Heart right ventricle (tissue), 16 donors: ENCODE measurements at regions of chr3 and their contacts with region 1.

Region 1: DNA sequence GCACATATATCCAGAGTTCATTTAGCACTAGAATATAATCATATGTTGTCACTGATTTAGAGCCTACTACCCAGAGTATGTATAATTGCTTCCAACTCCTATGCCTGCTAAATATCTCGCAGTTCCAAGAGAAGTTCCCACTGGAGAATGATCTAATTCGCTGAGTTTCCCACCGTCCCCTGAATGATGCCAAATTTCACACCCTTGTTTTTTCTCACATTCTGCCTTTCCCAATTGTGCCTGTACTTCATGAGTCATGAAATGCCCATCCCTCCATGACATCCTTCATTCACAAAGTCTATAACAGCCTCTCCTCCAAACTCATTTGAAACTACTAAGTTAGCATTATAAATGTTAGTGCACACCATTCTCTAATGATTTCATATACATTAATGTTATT is 177.2 kb downstream of the CBLB start:
- DNase-seq: no peak
- ATAC-seq: peak in 7 of 8 donors; percentile 31 to 89 (median 49)
- H3K4me3 ChIP-seq: no peak overlapping the region
- H3K27ac ChIP-seq: peak overlapping the region in 2 of 10 donors; percentile 6 to 9
- H3K4me1 ChIP-seq: peaks cover 0 to 37% (median 14%) of the 10 kb centered on the region in 9 donors
- H3K27me3 ChIP-seq: no peaks in the 10 kb centered on the region
- CTCF ChIP-seq: no peak

Region 2: DNA sequence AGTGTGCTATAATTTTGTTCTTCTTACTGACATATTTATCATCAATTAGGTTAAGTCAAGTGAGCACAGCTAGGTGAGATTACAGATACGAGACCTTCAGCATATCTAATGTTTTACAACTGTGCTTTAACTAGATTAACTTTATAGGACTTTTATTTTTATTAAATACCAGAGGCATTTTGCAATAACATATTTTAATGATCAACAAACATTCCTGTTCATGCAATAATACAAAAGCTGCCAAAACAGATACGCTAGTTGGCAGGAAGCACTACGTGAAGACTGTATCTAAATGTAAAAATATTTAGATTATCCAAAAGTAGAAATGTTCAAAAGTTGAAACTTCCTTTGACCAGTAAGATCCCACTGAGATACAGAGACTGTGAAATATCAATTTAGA is 38.0 kb after region 1 on chr3:
- intact Hi-C with region 1: no loop called
- DNase-seq: no peak
- ATAC-seq: no peak
- H3K4me3 ChIP-seq: no peak overlapping the region
- H3K27ac ChIP-seq: no peak overlapping the region
- H3K4me1 ChIP-seq: peaks cover 0 to 26% (median 3%) of the 10 kb centered on the region in 9 donors
- H3K27me3 ChIP-seq: no peaks in the 10 kb centered on the region
- CTCF ChIP-seq: no peak

Region 3: GRCh38 chr3:105876780-105877327 is 185.2 kb after region 1 on chr3:
- intact Hi-C with region 1: loop called in 1 of 10 experiments (anchors 10 kb)
- DNase-seq: no peak
- ATAC-seq: peak in 2 of 8 donors; percentile 55 to 83
- H3K4me3 ChIP-seq: no peak overlapping the region
- H3K27ac ChIP-seq: peak overlapping the region in 1 of 10 donors; percentile 13
- H3K4me1 ChIP-seq: peaks cover 0 to 19% (median 0%) of the 10 kb centered on the region in 9 donors
- H3K27me3 ChIP-seq: no peaks in the 10 kb centered on the region
- CTCF ChIP-seq: no peak

Region 4: GRCh38 chr3:106119614-106120082 is 428.0 kb after region 1 on chr3:
- intact Hi-C with region 1: loop called in 2 of 10 experiments (anchors 10 kb)
- DNase-seq: no peak
- ATAC-seq: no peak
- H3K4me3 ChIP-seq: no peak overlapping the region
- H3K27ac ChIP-seq: peak overlapping the region in 1 of 10 donors; percentile 71
- H3K4me1 ChIP-seq: peaks cover 0 to 20% (median 0%) of the 10 kb centered on the region in 9 donors
- H3K27me3 ChIP-seq: no peaks in the 10 kb centered on the region
- CTCF ChIP-seq: no peak

Region 5: DNA sequence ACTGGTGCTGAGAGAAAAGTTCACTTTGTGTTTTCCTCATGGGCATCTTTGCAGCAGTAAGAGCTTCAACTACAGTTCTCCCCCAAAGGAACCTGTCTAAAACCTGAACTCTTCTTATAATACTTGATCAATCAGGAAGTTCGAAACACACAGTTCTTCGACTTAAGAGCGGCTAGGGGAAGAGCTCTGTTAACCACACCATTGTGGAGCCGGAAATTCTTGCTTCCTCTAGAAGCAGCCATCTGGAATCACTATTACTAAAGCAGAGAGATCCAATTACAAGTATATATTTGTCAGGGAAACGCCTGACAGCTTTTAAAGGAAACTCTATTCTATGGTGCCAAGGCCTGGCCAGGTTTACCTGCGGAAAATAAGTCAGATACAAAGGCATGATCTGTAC is 514.5 kb after region 1 on chr3:
- intact Hi-C with region 1: loop called in 7 of 10 experiments (anchors 5 to 10 kb)
- DNase-seq: peak in 1 of 2 donors; percentile 15
- ATAC-seq: peak in 7 of 8 donors; percentile 70 to 94 (median 87)
- H3K4me3 ChIP-seq: peak overlapping the region in 3 of 10 donors; percentile 12 to 22 (median 12)
- H3K27ac ChIP-seq: peak overlapping the region in 7 of 10 donors; percentile 4 to 80 (median 57)
- H3K4me1 ChIP-seq: peaks cover 0 to 27% (median 12%) of the 10 kb centered on the region in 9 donors
- H3K27me3 ChIP-seq: no peaks in the 10 kb centered on the region
- CTCF ChIP-seq: no peak

Region 6: GRCh38 chr3:106212665-106213222 is 521.1 kb after region 1 on chr3:
- intact Hi-C with region 1: loop called in 7 of 10 experiments (anchors 5 to 10 kb)
- DNase-seq: no peak
- ATAC-seq: no peak
- H3K4me3 ChIP-seq: no peak overlapping the region
- H3K27ac ChIP-seq: no peak overlapping the region
- H3K4me1 ChIP-seq: peaks cover 0 to 16% (median 11%) of the 10 kb centered on the region in 9 donors
- H3K27me3 ChIP-seq: no peaks in the 10 kb centered on the region
- CTCF ChIP-seq: no peak